CD4-positive, alpha-beta T cell (primary cell): ENCODE measurements at regions of chr17 and their contacts with region 1.

Region 1: GRCh38 chr17:65561394-65562205 is at the start of gene AXIN2:
- DNase-seq: peak; percentile 77 to 93 (median 87)
- ATAC-seq: peak; percentile 75
- H3K4me3 ChIP-seq: peak within 1 kb of the TSS; percentile 66
- H3K4me3 Mint-ChIP-seq: peak within 1 kb of the TSS; percentile 94
- H3K27ac ChIP-seq: peak within 1 kb of the TSS; percentile 78 to 80
- H3K27ac Mint-ChIP-seq: peak within 1 kb of the TSS; percentile 92
- H3K4me1 ChIP-seq: peaks cover 21% of the 10 kb centered on the region
- H3K4me1 Mint-ChIP-seq: peaks cover 42% of the 10 kb centered on the region
- H3K27me3 ChIP-seq: no peaks in the 10 kb centered on the region
- H3K27me3 Mint-ChIP-seq: no peaks in the 10 kb centered on the region
- CTCF ChIP-seq: no peak
- total RNA-seq, gene AXIN2: 47.9 to 49.8 TPM

Region 2: GRCh38 chr17:64262417-64263260 is 1299.0 kb before region 1 on chr17 and contains the start of gene TEX2:
- CTCF ChIA-PET with region 1: no interaction called
- POLR2A ChIA-PET with region 1: no interaction called
- intact Hi-C with region 1: loop called in 1 of 2 experiments (anchors 5 kb)
- DNase-seq: peak; percentile 39 to 87 (median 60)
- ATAC-seq: peak; percentile 47
- H3K4me3 ChIP-seq: peak within 1 kb of the TSS; percentile 70
- H3K4me3 Mint-ChIP-seq: peak within 1 kb of the TSS; percentile 92
- H3K27ac ChIP-seq: peak within 1 kb of the TSS; percentile 70 to 86
- H3K27ac Mint-ChIP-seq: peak within 1 kb of the TSS; percentile 95
- H3K4me1 ChIP-seq: peaks cover 28% of the 10 kb centered on the region
- H3K4me1 Mint-ChIP-seq: peaks cover 46% of the 10 kb centered on the region
- H3K27me3 ChIP-seq: no peaks in the 10 kb centered on the region
- H3K27me3 Mint-ChIP-seq: peaks cover 6% of the 10 kb centered on the region
- CTCF ChIP-seq: no peak
- total RNA-seq, gene TEX2: 8.6 to 8.9 TPM

Region 3: DNA sequence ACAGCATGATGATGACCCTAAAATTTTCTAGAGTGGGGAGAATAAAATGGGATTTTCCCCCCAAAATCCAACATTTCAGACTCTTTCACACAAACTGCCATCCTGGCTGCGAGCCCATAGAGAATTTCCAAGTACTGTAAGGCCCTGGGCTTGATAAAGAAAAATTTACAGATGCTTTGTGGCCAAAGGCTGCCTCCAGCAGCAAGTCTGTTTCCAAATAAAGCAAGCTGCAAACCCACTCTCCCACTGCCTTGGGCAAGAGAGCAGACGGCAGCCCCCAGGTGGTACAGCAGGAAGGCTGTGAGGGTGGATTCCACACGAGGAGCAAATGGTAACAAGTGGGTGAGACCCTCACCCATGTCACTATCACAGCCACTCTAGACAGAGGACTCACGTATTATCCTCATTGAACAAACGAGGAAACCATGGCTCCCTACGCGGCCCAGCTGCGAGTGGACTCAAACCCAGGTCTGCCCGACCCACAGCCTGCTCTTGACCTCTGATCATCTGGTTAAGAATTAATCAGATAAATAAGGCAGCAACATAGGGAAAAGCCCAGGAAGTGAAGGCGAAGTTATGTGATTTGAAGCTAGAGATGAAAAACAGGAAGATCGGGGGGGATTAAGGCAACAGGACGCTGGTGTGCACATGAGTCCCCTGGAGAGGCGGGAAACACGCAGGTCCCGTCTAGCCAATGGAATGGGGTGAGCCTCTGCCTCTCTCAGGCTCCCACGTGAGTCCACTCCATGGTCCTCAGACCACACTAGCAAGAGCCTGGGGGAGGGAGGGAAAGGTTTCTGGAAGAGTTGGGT is 37.5 kb before region 1 on chr17:
- CTCF ChIA-PET with region 1: interaction called, 3 read pairs
- POLR2A ChIA-PET with region 1: interaction called, 3 read pairs
- intact Hi-C with region 1: loop called (anchors 1 to 2 kb)
- DNase-seq: peak in 3 of 14 experiments; percentile 8 to 28 (median 27)
- ATAC-seq: peak; percentile 13
- H3K4me3 ChIP-seq: no peak overlapping the region
- H3K4me3 Mint-ChIP-seq: peak overlapping the region; percentile 26
- H3K27ac ChIP-seq: peak overlapping the region; percentile 16 to 36
- H3K27ac Mint-ChIP-seq: peak overlapping the region; percentile 86
- H3K4me1 ChIP-seq: peaks cover 32% of the 10 kb centered on the region
- H3K4me1 Mint-ChIP-seq: peaks cover 49% of the 10 kb centered on the region
- H3K27me3 ChIP-seq: no peaks in the 10 kb centered on the region
- H3K27me3 Mint-ChIP-seq: no peaks in the 10 kb centered on the region
- CTCF ChIP-seq: no peak

Region 4: DNA sequence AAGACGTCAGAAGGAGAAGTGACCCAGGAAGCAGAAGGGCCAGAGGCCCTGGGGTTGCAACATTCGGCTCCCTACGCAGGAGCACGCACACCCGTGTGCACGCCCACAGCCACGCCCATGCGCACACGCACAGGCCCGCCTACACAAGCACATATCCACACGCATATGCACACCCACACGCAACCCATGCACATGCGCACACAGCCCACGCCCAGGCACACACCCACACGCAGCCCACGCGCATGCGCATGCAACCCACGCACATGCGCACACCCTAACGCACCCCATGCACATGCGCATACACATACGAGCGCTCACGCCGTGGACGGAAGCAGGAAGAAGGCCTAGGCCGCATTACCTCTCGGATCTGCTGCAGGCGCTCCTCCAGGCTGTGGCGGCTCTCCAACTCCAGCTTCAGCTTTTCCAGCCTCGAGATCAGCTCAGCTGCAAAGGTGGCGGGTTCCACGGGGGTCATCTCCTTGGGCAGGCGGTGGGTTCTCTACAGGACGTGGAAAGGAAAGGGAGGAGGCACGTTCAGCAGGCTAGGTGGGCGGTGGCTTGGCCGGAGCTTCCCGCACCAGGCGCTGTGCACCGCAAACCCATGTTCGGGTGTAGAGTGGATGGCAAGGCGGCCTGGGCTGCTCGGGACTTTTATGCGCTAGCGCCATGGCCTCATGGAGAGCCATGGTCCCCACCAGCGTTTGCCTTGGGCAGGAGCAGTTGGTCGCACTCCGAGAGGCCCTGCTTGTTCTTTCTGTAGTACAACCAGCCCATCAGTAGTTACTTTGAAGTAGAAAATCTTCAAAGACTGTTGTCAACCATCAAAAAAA is 23.5 kb before region 1 on chr17:
- CTCF ChIA-PET with region 1: interaction called, 17 read pairs
- POLR2A ChIA-PET with region 1: interaction called, 21 read pairs
- intact Hi-C with region 1: loop called (anchors 1 to 2 kb)
- DNase-seq: peak; percentile 53 to 88 (median 64)
- ATAC-seq: peak; percentile 70
- H3K4me3 ChIP-seq: peak overlapping the region; percentile 50
- H3K4me3 Mint-ChIP-seq: peak overlapping the region; percentile 83
- H3K27ac ChIP-seq: no peak overlapping the region
- H3K27ac Mint-ChIP-seq: peak overlapping the region; percentile 89
- H3K4me1 ChIP-seq: peaks cover 21% of the 10 kb centered on the region
- H3K4me1 Mint-ChIP-seq: peaks cover 61% of the 10 kb centered on the region
- H3K27me3 ChIP-seq: no peaks in the 10 kb centered on the region
- H3K27me3 Mint-ChIP-seq: no peaks in the 10 kb centered on the region
- CTCF ChIP-seq: no peak

Region 5: GRCh38 chr17:65737451-65737850 is 175.9 kb after region 1 on chr17:
- CTCF ChIA-PET with region 1: no interaction called
- POLR2A ChIA-PET with region 1: interaction called, 5 read pairs
- intact Hi-C with region 1: loop called in 1 of 2 experiments (anchors 5 kb)
- DNase-seq: no peak
- ATAC-seq: no peak
- H3K4me3 ChIP-seq: no peak overlapping the region
- H3K4me3 Mint-ChIP-seq: no peak overlapping the region
- H3K27ac ChIP-seq: no peak overlapping the region
- H3K27ac Mint-ChIP-seq: no peak overlapping the region
- H3K4me1 ChIP-seq: peaks cover 2% of the 10 kb centered on the region
- H3K4me1 Mint-ChIP-seq: peaks cover 36% of the 10 kb centered on the region
- H3K27me3 ChIP-seq: no peaks in the 10 kb centered on the region
- H3K27me3 Mint-ChIP-seq: no peaks in the 10 kb centered on the region
- CTCF ChIP-seq: no peak

Region 6: GRCh38 chr17:65794572-65794971 is 233.0 kb after region 1 on chr17:
- CTCF ChIA-PET with region 1: interaction called, 4 read pairs
- POLR2A ChIA-PET with region 1: interaction called, 5 read pairs
- intact Hi-C with region 1: loop called in 1 of 2 experiments (anchors 5 kb)
- DNase-seq: peak in 4 of 14 experiments; percentile 9 to 47 (median 36)
- ATAC-seq: peak; percentile 56
- H3K4me3 ChIP-seq: no peak overlapping the region
- H3K4me3 Mint-ChIP-seq: no peak overlapping the region
- H3K27ac ChIP-seq: no peak overlapping the region
- H3K27ac Mint-ChIP-seq: no peak overlapping the region
- H3K4me1 ChIP-seq: no peaks in the 10 kb centered on the region
- H3K4me1 Mint-ChIP-seq: no peaks in the 10 kb centered on the region
- H3K27me3 ChIP-seq: no peaks in the 10 kb centered on the region
- H3K27me3 Mint-ChIP-seq: no peaks in the 10 kb centered on the region
- CTCF ChIP-seq: peak; percentile 60